OCI-LY7 (cell line): ENCODE measurements at regions of chr3 and their contacts with region 1.

Region 1: DNA sequence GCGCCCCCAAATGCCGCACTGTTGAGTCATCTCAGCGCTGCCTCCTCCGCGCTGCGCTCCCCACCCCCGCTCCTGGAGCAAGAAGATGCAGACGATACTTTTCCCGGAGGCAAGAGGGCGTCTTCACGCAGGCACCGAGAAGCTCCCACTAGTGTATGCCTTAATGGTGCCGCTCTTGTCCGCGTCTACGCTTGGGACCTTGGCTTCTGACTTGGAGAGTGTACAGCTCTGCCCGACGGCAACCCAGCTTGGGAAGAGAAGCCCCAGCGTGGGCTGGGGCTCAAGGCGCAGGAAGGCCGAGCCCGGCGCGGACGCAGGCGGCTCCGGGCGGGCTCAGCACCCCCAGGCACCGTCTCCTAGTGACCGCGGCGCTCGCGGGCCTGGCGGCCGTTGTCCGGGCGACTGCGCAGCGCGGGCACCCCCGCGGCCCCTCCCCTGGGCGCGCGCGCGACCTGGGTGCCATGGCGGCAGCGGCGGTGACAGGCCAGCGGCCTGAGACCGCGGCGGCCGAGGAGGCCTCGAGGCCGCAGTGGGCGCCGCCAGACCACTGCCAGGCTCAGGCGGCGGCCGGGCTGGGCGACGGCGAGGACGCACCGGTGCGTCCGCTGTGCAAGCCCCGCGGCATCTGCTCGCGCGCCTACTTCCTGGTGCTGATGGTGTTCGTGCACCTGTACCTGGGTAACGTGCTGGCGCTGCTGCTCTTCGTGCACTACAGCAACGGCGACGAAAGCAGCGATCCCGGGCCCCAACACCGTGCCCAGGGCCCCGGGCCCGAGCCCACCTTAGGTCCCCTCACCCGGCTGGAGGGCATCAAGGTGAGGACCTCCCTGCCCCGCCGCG is at the start of gene P4HTM:
- DNase-seq: peak; percentile 70
- H3K4me3 ChIP-seq: peak within 1 kb of the TSS; percentile 84
- H3K27ac ChIP-seq: peak within 1 kb of the TSS; percentile 46
- H3K4me1 ChIP-seq: peaks cover 27% of the 10 kb centered on the region
- CTCF ChIP-seq: peak; percentile 55
- total RNA-seq, gene P4HTM: 45.3 and 48.4 TPM in 2 replicates

Region 2: DNA sequence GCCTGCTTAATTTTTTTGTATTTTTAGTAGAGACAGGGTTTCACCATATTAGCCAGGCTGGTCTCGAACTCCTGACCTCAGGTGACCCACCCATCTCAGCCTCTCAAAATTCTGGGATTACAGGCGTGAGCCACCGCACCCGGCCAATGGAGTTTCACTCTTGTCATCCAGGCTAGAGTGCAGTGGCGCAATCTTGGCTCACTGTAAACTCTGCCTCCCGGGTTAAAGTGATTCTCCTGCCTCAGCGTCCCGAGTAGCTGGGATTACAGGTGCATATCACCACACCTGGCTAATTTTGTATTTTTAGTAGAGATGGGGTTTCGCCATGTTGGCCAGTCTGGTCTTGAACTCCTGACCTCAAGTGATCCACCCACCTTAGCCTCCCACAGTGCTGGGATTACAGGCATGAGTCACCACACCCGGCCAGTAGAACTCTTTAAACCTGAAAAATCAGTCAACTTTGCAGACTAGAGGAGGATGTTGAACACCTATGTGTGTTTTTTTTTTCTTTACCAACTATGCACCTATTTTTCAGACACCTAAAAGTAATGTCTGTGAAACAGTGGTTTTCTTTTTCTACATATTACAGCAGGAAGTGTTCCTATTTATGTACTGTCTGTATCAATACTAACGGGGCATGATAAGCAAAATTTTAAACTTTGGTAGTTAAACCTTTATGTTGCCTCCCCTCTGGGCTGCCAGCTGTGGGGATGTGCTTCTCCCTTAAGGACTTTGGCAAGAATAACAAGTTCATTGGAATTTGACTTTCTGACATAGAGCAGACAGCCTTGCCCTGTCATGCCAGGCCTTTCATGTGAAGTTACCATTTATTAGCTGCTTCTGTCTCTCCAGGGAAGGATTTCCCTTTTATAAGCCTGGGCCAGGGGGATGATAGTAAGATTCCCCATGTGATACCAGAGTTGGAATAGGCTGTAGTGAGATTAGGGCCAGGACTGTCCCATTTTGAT is 63.3 kb before region 1 on chr3:
- CTCF ChIA-PET with region 1: no interaction called
- POLR2A ChIA-PET with region 1: no interaction called
- intact Hi-C with region 1: no loop called
- DNase-seq: no peak
- H3K4me3 ChIP-seq: no peak overlapping the region
- H3K27ac ChIP-seq: no peak overlapping the region
- H3K4me1 ChIP-seq: peaks cover 36% of the 10 kb centered on the region
- CTCF ChIP-seq: no peak

Region 3: GRCh38 chr3:49007068-49007770 is 17.2 kb after region 1 on chr3 and contains the start of gene WDR6:
- CTCF ChIA-PET with region 1: interaction called, 9 read pairs
- POLR2A ChIA-PET with region 1: interaction called, 15 read pairs
- intact Hi-C with region 1: loop called (anchors 2 kb)
- DNase-seq: peak; percentile 99
- H3K4me3 ChIP-seq: peak within 1 kb of the TSS; percentile 78
- H3K27ac ChIP-seq: peak within 1 kb of the TSS; percentile 74
- H3K4me1 ChIP-seq: peaks cover 18% of the 10 kb centered on the region
- CTCF ChIP-seq: peak; percentile 73
- total RNA-seq, gene WDR6: 92.0 and 101 TPM in 2 replicates

Region 4: GRCh38 chr3:49013755-49014628 is 24.0 kb after region 1 on chr3:
- CTCF ChIA-PET with region 1: interaction called, 7 read pairs
- POLR2A ChIA-PET with region 1: interaction called, 6 read pairs
- intact Hi-C with region 1: loop called (anchors 1 kb)
- DNase-seq: peak; percentile 69
- H3K4me3 ChIP-seq: no peak overlapping the region
- H3K27ac ChIP-seq: no peak overlapping the region
- H3K4me1 ChIP-seq: peaks cover 15% of the 10 kb centered on the region
- CTCF ChIP-seq: peak; percentile 82

Region 5: DNA sequence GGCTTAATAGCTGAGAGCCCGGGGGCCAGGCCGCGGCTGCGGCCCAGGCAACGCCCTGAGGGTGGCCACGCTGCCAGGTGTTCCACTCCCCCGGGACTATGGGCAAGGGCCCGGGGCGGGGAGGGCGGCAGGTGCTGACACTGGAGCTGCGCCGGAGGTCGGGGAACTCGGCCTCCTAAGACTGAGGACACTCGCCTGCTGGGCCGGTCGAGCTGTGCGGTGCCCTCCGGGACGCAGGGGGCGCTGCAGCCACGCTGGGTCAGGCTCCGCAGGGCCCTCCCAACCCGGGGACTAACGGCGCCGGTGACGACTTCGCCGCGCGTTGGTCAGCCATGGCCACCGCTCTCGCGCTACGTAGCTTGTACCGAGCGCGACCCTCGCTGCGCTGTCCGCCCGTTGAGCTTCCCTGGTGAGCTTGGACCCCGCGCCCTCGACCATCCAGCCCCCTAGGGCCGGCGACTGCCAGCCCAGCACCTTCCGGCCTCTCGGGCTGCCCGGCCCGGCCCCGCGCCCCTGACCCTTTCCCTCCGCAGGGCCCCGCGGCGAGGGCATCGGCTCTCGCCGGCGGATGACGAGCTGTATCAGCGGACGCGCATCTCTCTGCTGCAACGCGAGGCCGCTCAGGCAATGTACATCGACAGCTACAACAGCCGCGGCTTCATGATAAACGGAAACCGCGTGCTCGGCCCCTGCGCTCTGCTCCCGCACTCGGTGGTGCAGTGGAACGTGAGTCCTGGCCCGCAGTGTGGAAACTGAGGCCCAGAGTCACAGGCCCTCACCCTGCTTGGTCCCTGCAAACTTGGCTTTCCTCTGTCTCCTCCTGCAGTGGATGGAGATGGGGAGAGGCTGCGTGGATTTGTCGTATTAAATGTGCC is 32.0 kb after region 1 on chr3 and contains the start of gene NDUFAF3:
- CTCF ChIA-PET with region 1: no interaction called
- POLR2A ChIA-PET with region 1: interaction called, 6 read pairs
- intact Hi-C with region 1: loop called (anchors 2 kb)
- DNase-seq: peak; percentile 99
- H3K4me3 ChIP-seq: peak within 1 kb of the TSS; percentile 80
- H3K27ac ChIP-seq: peak within 1 kb of the TSS; percentile 93
- H3K4me1 ChIP-seq: peaks cover 65% of the 10 kb centered on the region
- CTCF ChIP-seq: peak; percentile 84
- total RNA-seq, gene NDUFAF3: 255 and 309 TPM in 2 replicates

Region 6: DNA sequence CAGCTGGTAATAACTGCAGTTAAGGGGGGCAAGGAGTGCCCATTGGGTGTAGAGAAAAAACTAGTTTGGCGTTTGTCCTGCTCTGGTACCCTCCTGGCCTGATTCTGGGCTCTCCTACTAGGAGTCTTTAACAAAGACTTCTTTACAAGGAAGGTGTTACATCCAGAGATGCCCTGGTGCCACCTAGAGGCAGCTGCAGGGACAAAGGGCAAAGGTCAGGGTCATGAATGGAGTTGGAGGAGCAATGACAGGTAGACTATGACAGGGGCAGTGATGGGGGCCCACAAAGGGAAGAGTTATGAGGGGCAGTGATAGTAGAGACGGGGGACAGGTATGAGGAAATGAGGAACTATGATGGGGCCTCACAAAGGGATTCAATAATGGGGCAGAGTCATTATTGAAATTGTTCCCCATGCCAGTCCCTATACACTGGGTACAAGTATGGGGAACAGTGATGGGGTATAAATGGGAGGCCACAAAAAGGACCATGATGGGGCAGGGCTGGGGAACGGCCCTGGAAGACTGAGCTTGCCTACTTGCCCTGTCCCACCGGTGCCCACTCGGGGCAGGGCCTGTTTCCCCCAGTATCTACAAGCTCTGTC is 168.2 kb after region 1 on chr3:
- CTCF ChIA-PET with region 1: no interaction called
- POLR2A ChIA-PET with region 1: no interaction called
- intact Hi-C with region 1: loop called (anchors 1 kb)
- DNase-seq: peak; percentile 72
- H3K4me3 ChIP-seq: no peak overlapping the region
- H3K27ac ChIP-seq: no peak overlapping the region
- H3K4me1 ChIP-seq: no peaks in the 10 kb centered on the region
- CTCF ChIP-seq: peak; percentile 83

Region 7: GRCh38 chr3:49411968-49412631 is 422.1 kb after region 1 on chr3 and contains the starts of genes RHOA and TCTA:
- CTCF ChIA-PET with region 1: no interaction called
- POLR2A ChIA-PET with region 1: no interaction called
- intact Hi-C with region 1: no loop called
- DNase-seq: peak; percentile 100
- H3K4me3 ChIP-seq: peak within 1 kb of the TSS; percentile 91
- H3K27ac ChIP-seq: peak within 1 kb of the TSS; percentile 79
- H3K4me1 ChIP-seq: peaks cover 65% of the 10 kb centered on the region
- CTCF ChIP-seq: no peak
- total RNA-seq, gene RHOA: 218 and 219 TPM in 2 replicates
- total RNA-seq, gene TCTA: 15.8 and 17.9 TPM in 2 replicates